ENCODE measurements at regions of chr3 and their contacts with region 1.

Region 1: GRCh38 chr3:118884748-118885206 is 149.9 kb downstream of the IGSF11 start:
- DNase-seq: peak; percentile 41 to 87 (median 61)
- ATAC-seq: peak; percentile 95
- H3K4me3 ChIP-seq: no peak overlapping the region
- H3K27ac ChIP-seq: no peak overlapping the region
- H3K4me1 ChIP-seq: no peaks in the 10 kb centered on the region
- H3K27me3 ChIP-seq: peaks cover 0 to 30% of the 10 kb centered on the region in 2 donors
- CTCF ChIP-seq: peak; percentile 70 to 80

Region 2: DNA sequence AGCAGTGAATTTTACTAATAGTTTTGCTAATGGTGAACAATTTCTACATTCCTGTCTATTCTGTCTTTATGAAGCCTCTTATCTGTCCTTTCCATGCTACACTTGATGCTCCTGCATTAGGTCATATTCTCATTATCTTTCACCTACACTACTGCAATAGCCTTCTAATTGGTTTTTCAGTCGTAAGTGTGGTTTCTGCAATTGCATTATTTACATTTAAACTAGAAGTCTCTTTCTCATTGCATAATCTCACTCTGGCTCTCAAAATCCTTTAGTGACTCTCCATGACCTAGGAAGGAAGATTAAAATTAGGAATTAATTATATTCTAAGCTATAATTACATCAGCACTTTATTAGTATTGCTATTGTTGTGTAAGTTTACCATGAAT is 536.6 kb before region 1 on chr3:
- intact Hi-C with region 1: no loop called
- DNase-seq: no peak
- ATAC-seq: no peak
- H3K4me3 ChIP-seq: no peak overlapping the region
- H3K27ac ChIP-seq: no peak overlapping the region
- H3K4me1 ChIP-seq: no peaks in the 10 kb centered on the region
- H3K27me3 ChIP-seq: no peaks in the 10 kb centered on the region
- CTCF ChIP-seq: no peak

Region 3: GRCh38 chr3:118833075-118833474 is 51.7 kb before region 1 on chr3:
- intact Hi-C with region 1: no loop called
- DNase-seq: no peak
- ATAC-seq: peak; percentile 24
- H3K4me3 ChIP-seq: no peak overlapping the region
- H3K27ac ChIP-seq: no peak overlapping the region
- H3K4me1 ChIP-seq: no peaks in the 10 kb centered on the region
- H3K27me3 ChIP-seq: no peaks in the 10 kb centered on the region
- CTCF ChIP-seq: no peak

Region 4: GRCh38 chr3:119034256-119035013 is 149.7 kb after region 1 on chr3 and contains the start of gene IGSF11:
- intact Hi-C with region 1: loop called in 1 of 2 experiments (anchors 10 kb)
- DNase-seq: peak; percentile 52 to 85 (median 74)
- ATAC-seq: peak; percentile 96
- H3K4me3 ChIP-seq: peak within 1 kb of the TSS; percentile 45 to 60
- H3K27ac ChIP-seq: no peak within 1 kb of the TSS
- H3K4me1 ChIP-seq: no peaks in the 10 kb centered on the region
- H3K27me3 ChIP-seq: peaks cover 42 to 79% of the 10 kb centered on the region in 2 donors
- CTCF ChIP-seq: peak in 1 of 2 donors; percentile 47
- polyA plus RNA-seq, gene IGSF11: 0.41 to 1.3 (median 0.76) TPM

Region 5: GRCh38 chr3:119098619-119099222 is 213.9 kb after region 1 on chr3:
- intact Hi-C with region 1: loop called in 1 of 2 experiments (anchors 5 kb)
- DNase-seq: peak in 2 of 4 donors; percentile 19 to 47
- ATAC-seq: peak; percentile 59
- H3K4me3 ChIP-seq: no peak overlapping the region
- H3K27ac ChIP-seq: no peak overlapping the region
- H3K4me1 ChIP-seq: no peaks in the 10 kb centered on the region
- H3K27me3 ChIP-seq: no peaks in the 10 kb centered on the region
- CTCF ChIP-seq: peak; percentile 36 to 56

Region 6: GRCh38 chr3:119690043-119690656 is 805.4 kb after region 1 on chr3:
- intact Hi-C with region 1: loop called in 1 of 2 experiments (anchors 10 kb)
- DNase-seq: peak in 1 of 4 donors; percentile 16
- ATAC-seq: peak; percentile 23
- H3K4me3 ChIP-seq: no peak overlapping the region
- H3K27ac ChIP-seq: no peak overlapping the region
- H3K4me1 ChIP-seq: no peaks in the 10 kb centered on the region
- H3K27me3 ChIP-seq: no peaks in the 10 kb centered on the region
- CTCF ChIP-seq: peak; percentile 39 to 57